CD8-positive, alpha-beta T cell (primary cell): ENCODE measurements at regions of chr10 and their contacts with region 1.

Region 1: GRCh38 chr10:91601212-91601611 is 31.7 kb downstream of the PPP1R3C start:
- DNase-seq: no peak
- ATAC-seq: no peak
- H3K4me3 ChIP-seq: no peak overlapping the region
- H3K4me3 Mint-ChIP-seq: no peak overlapping the region
- H3K27ac ChIP-seq: no peak overlapping the region
- H3K27ac Mint-ChIP-seq: no peak overlapping the region
- H3K4me1 ChIP-seq: no peaks in the 10 kb centered on the region
- H3K4me1 Mint-ChIP-seq: no peaks in the 10 kb centered on the region
- H3K27me3 ChIP-seq: no peaks in the 10 kb centered on the region
- H3K27me3 Mint-ChIP-seq: peaks cover 7% of the 10 kb centered on the region
- CTCF ChIP-seq: no peak

Region 2: DNA sequence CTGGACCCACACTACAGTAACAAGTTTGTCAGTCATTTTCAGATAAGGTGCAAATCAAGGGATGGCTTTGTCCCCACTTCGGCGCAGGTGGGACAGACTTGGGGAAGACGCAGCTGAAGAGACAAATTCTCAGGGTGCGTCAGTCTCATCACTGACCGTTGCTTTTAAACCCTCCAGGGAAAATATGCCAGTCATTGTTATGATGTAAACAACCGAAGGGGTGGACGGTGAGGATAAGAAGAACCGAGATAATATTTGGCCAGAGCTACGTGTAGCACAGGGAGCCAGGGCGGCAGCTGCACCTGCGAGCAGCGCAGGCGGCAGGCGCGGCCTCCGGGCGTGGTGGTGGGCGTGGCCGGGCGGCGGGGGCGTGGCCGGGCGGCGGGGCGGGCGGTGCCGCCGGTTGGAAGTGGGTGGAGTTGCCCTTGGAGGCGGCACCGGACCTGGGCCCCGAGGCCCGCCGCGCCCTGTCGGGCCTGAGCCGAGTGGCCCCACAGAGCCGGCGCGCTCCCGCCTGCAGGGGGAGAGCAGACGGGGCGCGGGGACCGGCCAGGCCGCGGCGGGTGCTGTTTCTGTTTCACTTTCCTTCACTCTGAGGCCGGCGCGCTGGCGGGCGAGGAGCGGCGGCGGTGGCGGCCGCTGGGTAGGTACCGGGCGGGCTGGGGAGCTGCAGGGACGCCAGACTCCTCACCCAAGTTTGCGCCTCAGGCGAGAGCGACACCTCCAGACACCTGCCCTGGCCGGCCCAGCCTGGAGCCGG is 380.8 kb before region 1 on chr10 and contains the start of gene PCGF5:
- CTCF ChIA-PET with region 1: no interaction called
- POLR2A ChIA-PET with region 1: no interaction called
- intact Hi-C with region 1: no loop called
- DNase-seq: peak; percentile 87 to 97 (median 91)
- ATAC-seq: peak; percentile 94
- H3K4me3 ChIP-seq: peak within 1 kb of the TSS; percentile 66 to 80
- H3K4me3 Mint-ChIP-seq: peak within 1 kb of the TSS; percentile 89
- H3K27ac ChIP-seq: peak within 1 kb of the TSS; percentile 74 to 76
- H3K27ac Mint-ChIP-seq: peak within 1 kb of the TSS; percentile 91
- H3K4me1 ChIP-seq: peaks cover 32% of the 10 kb centered on the region
- H3K4me1 Mint-ChIP-seq: peaks cover 51% of the 10 kb centered on the region
- H3K27me3 ChIP-seq: no peaks in the 10 kb centered on the region
- H3K27me3 Mint-ChIP-seq: no peaks in the 10 kb centered on the region
- CTCF ChIP-seq: no peak
- total RNA-seq, gene PCGF5: 67.5 to 70.7 TPM

Region 3: DNA sequence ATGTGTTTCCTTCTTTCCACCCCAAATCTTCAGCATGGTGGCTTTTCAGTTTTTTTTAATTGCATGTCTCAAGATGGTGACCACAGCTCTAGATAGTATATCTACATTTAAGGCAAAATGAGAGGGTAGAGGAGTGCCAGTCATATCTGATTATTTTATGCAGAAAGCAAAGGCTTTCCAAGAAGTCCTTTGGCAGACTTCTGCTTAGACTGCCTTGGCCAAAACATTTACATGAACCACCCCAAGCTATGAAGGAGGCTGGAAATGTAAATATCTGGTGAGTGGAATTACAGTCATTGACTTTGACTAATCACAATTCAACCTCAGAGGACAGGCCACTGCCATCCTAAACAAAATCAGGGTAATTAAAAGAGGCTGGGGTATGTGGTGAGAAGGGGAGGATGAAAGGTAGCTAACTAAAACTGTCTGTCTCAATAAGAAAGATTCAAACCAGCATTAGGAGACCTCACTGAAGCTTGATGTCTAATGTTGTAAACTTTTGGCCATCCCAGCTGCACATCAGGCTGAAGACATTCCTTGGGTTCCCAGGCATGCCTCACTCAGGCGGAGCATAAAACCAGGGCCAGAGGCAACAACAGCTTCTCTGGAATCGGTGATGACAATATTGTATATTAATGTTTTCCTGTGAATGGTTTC is 21.8 kb before region 1 on chr10:
- CTCF ChIA-PET with region 1: no interaction called
- POLR2A ChIA-PET with region 1: interaction called, 3 read pairs
- intact Hi-C with region 1: loop called in 1 of 2 experiments (anchors 1 kb)
- DNase-seq: no peak
- ATAC-seq: no peak
- H3K4me3 ChIP-seq: no peak overlapping the region
- H3K4me3 Mint-ChIP-seq: no peak overlapping the region
- H3K27ac ChIP-seq: no peak overlapping the region
- H3K27ac Mint-ChIP-seq: no peak overlapping the region
- H3K4me1 ChIP-seq: no peaks in the 10 kb centered on the region
- H3K4me1 Mint-ChIP-seq: no peaks in the 10 kb centered on the region
- H3K27me3 ChIP-seq: no peaks in the 10 kb centered on the region
- H3K27me3 Mint-ChIP-seq: peaks cover 6% of the 10 kb centered on the region
- CTCF ChIP-seq: no peak